ENCODE measurements at regions of chr10 and their contacts with region 1.

Region 1: GRCh38 chr10:27661514-27662286 is 83.9 kb downstream of the MKX start:
- DNase-seq: no peak
- H3K4me3 ChIP-seq: no peak overlapping the region
- H3K27ac ChIP-seq: no peak overlapping the region
- H3K4me1 ChIP-seq: no peaks in the 10 kb centered on the region
- H3K27me3 ChIP-seq: no peaks in the 10 kb centered on the region
- CTCF ChIP-seq: no peak
- EP300 ChIP-seq: no peak
- POLR2A ChIP-seq: no peak

Region 2: GRCh38 chr10:27446091-27446918 is 215.4 kb before region 1 on chr10:
- in situ Hi-C with region 1: loop called (anchors 10 to 25 kb)
- intact Hi-C with region 1: no loop called
- DNase-seq: no peak
- H3K4me3 ChIP-seq: no peak overlapping the region
- H3K27ac ChIP-seq: no peak overlapping the region
- H3K4me1 ChIP-seq: no peaks in the 10 kb centered on the region
- H3K27me3 ChIP-seq: no peaks in the 10 kb centered on the region
- CTCF ChIP-seq: peak; percentile 30 to 43 (median 34)
- EP300 ChIP-seq: no peak
- POLR2A ChIP-seq: no peak

Region 3: GRCh38 chr10:27558612-27559020 is 103.1 kb before region 1 on chr10:
- in situ Hi-C with region 1: loop called in 1 of 4 experiments (anchors 25 kb)
- intact Hi-C with region 1: no loop called
- DNase-seq: peak; percentile 58
- H3K4me3 ChIP-seq: no peak overlapping the region
- H3K27ac ChIP-seq: no peak overlapping the region
- H3K4me1 ChIP-seq: peaks cover 0 to 2% (median 0%) of the 10 kb centered on the region in 4 donors
- H3K27me3 ChIP-seq: no peaks in the 10 kb centered on the region
- CTCF ChIP-seq: peak; percentile 57 to 78 (median 74)
- EP300 ChIP-seq: no peak
- POLR2A ChIP-seq: no peak

Region 4: GRCh38 chr10:27698961-27699360 is 37.3 kb after region 1 on chr10:
- in situ Hi-C with region 1: no loop called
- intact Hi-C with region 1: loop called (anchors 1 kb)
- DNase-seq: no peak
- H3K4me3 ChIP-seq: no peak overlapping the region
- H3K27ac ChIP-seq: no peak overlapping the region
- H3K4me1 ChIP-seq: peaks cover 0 to 3% (median 2%) of the 10 kb centered on the region in 4 donors
- H3K27me3 ChIP-seq: no peaks in the 10 kb centered on the region
- CTCF ChIP-seq: no peak
- EP300 ChIP-seq: no peak
- POLR2A ChIP-seq: no peak

Region 5: GRCh38 chr10:27724287-27724686 is 62.6 kb after region 1 on chr10:
- in situ Hi-C with region 1: no loop called
- intact Hi-C with region 1: no loop called
- DNase-seq: no peak
- H3K4me3 ChIP-seq: no peak overlapping the region
- H3K27ac ChIP-seq: peak overlapping the region in 1 of 4 donors; percentile 32
- H3K4me1 ChIP-seq: no peaks in the 10 kb centered on the region
- H3K27me3 ChIP-seq: no peaks in the 10 kb centered on the region
- CTCF ChIP-seq: no peak
- EP300 ChIP-seq: no peak
- POLR2A ChIP-seq: no peak

Measured in transverse colon (tissue), 4 donors.